Activated CD8-positive, alpha-beta T cell treated with anti-CD3 and anti-CD28 coated beads, Interleukin-2, amount 10 ng/mL, durations not matched to agents 7 days and 5 days (primary cell): ENCODE measurements at regions of chr5 and their contacts with region 1.

Region 1: DNA sequence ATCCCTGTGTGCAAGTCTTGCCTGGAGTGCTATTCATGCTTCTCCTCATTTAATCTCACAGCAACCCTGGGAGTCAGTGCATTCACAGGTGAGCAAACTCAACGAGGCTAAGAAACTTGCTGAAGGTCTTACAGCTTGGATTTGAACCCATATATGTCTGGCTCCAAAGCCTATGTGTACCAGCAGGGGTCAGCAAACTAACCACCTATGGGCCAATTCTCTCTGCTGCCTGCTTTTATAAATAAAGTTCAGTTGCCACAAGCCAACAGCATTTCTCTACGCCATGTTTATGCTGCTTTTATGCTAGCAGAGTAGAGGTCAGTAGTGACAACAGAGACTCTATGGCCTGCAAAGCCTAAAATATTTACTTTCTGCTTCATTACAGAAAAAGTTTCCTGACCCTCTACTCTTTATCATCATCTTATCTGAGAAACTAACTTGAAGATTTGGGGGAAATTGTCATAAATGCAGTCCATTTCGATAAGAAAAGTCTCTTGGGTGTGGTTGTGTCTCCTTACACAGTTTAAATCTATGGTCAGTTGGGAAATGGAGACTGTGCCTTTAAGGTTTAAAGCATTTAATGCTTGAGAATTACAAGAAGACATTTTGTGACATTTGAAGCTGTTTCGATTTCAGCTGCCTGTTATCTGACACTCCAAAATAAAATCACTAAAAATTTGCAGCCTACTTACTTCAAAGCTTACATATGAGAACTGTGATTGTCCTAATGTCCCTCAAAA is 137.7 kb downstream of the PRELID2 start:
- DNase-seq: peak; percentile 28
- ATAC-seq: no peak
- H3K4me3 Mint-ChIP-seq: no peak overlapping the region
- H3K27ac Mint-ChIP-seq: no peak overlapping the region
- H3K4me1 Mint-ChIP-seq: no peaks in the 10 kb centered on the region
- H3K27me3 Mint-ChIP-seq: no peaks in the 10 kb centered on the region

Region 2: DNA sequence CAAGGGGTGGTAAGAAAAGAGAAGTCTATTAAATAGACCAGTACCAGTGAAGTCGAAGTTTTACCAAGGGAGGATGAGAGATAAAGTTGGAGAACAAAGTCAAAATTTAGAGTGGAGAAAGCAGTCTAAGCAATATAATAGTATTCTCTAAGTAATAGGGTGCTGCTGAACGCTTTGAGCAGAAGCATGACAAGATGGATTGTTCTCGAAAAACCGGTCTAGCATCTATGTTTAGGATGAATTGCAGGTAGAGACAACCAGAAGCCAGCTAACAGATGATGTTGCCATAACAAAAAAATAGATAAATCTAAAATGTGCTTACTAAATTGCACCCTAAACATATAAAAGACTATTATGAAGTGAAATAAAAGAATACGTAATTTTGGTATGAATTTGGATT is 99.2 kb before region 1 on chr5:
- CTCF ChIA-PET with region 1: no interaction called
- POLR2A ChIA-PET with region 1: no interaction called
- DNase-seq: no peak
- ATAC-seq: no peak
- H3K4me3 Mint-ChIP-seq: no peak overlapping the region
- H3K27ac Mint-ChIP-seq: no peak overlapping the region
- H3K4me1 Mint-ChIP-seq: no peaks in the 10 kb centered on the region
- H3K27me3 Mint-ChIP-seq: no peaks in the 10 kb centered on the region

Region 3: GRCh38 chr5:146130440-146131045 is 433.1 kb after region 1 on chr5:
- CTCF ChIA-PET with region 1: interaction called, 10 read pairs
- POLR2A ChIA-PET with region 1: no interaction called
- DNase-seq: no peak
- ATAC-seq: no peak
- H3K4me3 Mint-ChIP-seq: no peak overlapping the region
- H3K27ac Mint-ChIP-seq: no peak overlapping the region
- H3K4me1 Mint-ChIP-seq: no peaks in the 10 kb centered on the region
- H3K27me3 Mint-ChIP-seq: no peaks in the 10 kb centered on the region